Activated CD8-positive, alpha-beta memory T cell treated with anti-CD3 and anti-CD28 coated beads, Interleukin-2, amount 10 ng/mL, durations not matched to agents 7 days and 5 days (primary cell): ENCODE measurements at regions of chr14 and their contacts with region 1.

Region 1: GRCh38 chr14:61837336-61838229 is 75.4 kb downstream of the SNAPC1 start:
- DNase-seq: peak; percentile 83
- ATAC-seq: peak; percentile 97
- H3K4me3 Mint-ChIP-seq: no peak overlapping the region
- H3K27ac Mint-ChIP-seq: no peak overlapping the region
- H3K4me1 Mint-ChIP-seq: peaks cover 5% of the 10 kb centered on the region
- H3K27me3 Mint-ChIP-seq: peaks cover 33% of the 10 kb centered on the region

Region 2: GRCh38 chr14:61269321-61270083 is 568.1 kb before region 1 on chr14:
- CTCF ChIA-PET with region 1: interaction called, 19 read pairs
- DNase-seq: peak; percentile 87
- ATAC-seq: peak; percentile 94
- H3K4me3 Mint-ChIP-seq: peak overlapping the region; percentile 63
- H3K27ac Mint-ChIP-seq: no peak overlapping the region
- H3K4me1 Mint-ChIP-seq: peaks cover 8% of the 10 kb centered on the region
- H3K27me3 Mint-ChIP-seq: peaks cover 60% of the 10 kb centered on the region

Region 3: GRCh38 chr14:61475316-61475715 is 362.3 kb before region 1 on chr14:
- CTCF ChIA-PET with region 1: interaction called, 27 read pairs
- DNase-seq: no peak
- ATAC-seq: no peak
- H3K4me3 Mint-ChIP-seq: no peak overlapping the region
- H3K27ac Mint-ChIP-seq: peak overlapping the region; percentile 85
- H3K4me1 Mint-ChIP-seq: peaks cover 95% of the 10 kb centered on the region
- H3K27me3 Mint-ChIP-seq: no peaks in the 10 kb centered on the region

Region 4: DNA sequence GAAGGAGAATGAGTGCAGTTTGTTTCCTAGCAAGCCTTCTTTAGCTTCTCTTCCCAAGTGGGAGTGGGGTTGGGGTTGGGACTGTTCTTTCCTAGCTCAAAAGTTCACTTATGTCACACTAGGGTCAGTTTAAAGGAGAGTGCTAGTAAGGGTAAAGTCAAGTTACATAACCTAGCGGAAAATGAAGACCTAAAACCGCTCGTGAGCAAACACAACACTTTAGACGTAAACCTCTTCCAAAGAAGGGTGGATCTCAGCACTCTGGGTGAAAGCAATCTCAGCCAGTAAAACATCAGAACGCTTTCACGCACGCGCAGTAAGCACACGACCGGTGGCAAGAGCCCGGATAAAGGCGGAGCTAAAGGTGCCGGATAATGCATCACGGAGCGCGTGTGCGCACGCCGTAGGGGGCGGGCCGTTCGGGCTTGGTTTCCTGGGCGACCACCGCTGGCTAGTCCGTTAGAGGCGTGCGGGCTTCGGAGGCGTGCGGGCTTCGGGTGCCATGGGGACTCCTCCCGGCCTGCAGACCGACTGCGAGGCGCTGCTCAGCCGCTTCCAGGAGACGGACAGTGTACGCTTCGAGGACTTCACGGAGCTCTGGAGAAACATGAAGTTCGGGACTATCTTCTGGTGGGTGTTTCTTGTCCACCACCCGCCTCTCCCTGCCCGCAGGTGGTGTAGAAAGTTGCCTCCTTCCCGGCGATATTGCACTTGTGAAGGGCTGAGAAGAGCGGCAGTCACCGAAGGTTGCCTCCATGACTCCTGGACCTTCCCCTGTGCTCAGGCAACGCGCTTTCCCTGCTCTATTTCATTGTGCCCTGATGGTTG is 75.4 kb before region 1 on chr14 and contains the start of gene SNAPC1:
- CTCF ChIA-PET with region 1: interaction called, 13 read pairs
- DNase-seq: peak; percentile 99
- ATAC-seq: peak; percentile 99
- H3K4me3 Mint-ChIP-seq: peak within 1 kb of the TSS; percentile 94
- H3K27ac Mint-ChIP-seq: peak within 1 kb of the TSS; percentile 98
- H3K4me1 Mint-ChIP-seq: peaks cover 42% of the 10 kb centered on the region
- H3K27me3 Mint-ChIP-seq: no peaks in the 10 kb centered on the region
- total RNA-seq, gene SNAPC1: 5.1 to 5.8 TPM

Region 5: GRCh38 chr14:61860294-61860918 is 22.8 kb after region 1 on chr14:
- CTCF ChIA-PET with region 1: interaction called, 11 read pairs
- DNase-seq: peak; percentile 76
- ATAC-seq: peak; percentile 90
- H3K4me3 Mint-ChIP-seq: no peak overlapping the region
- H3K27ac Mint-ChIP-seq: no peak overlapping the region
- H3K4me1 Mint-ChIP-seq: no peaks in the 10 kb centered on the region
- H3K27me3 Mint-ChIP-seq: peaks cover 27% of the 10 kb centered on the region

Region 6: GRCh38 chr14:61925043-61925442 is 87.5 kb after region 1 on chr14:
- CTCF ChIA-PET with region 1: no interaction called
- DNase-seq: no peak
- ATAC-seq: no peak
- H3K4me3 Mint-ChIP-seq: no peak overlapping the region
- H3K27ac Mint-ChIP-seq: no peak overlapping the region
- H3K4me1 Mint-ChIP-seq: peaks cover 3% of the 10 kb centered on the region
- H3K27me3 Mint-ChIP-seq: peaks cover 52% of the 10 kb centered on the region

Region 7: GRCh38 chr14:61950340-61950739 is 112.8 kb after region 1 on chr14:
- CTCF ChIA-PET with region 1: no interaction called
- DNase-seq: no peak
- ATAC-seq: no peak
- H3K4me3 Mint-ChIP-seq: no peak overlapping the region
- H3K27ac Mint-ChIP-seq: no peak overlapping the region
- H3K4me1 Mint-ChIP-seq: no peaks in the 10 kb centered on the region
- H3K27me3 Mint-ChIP-seq: peaks cover 23% of the 10 kb centered on the region

Region 8: DNA sequence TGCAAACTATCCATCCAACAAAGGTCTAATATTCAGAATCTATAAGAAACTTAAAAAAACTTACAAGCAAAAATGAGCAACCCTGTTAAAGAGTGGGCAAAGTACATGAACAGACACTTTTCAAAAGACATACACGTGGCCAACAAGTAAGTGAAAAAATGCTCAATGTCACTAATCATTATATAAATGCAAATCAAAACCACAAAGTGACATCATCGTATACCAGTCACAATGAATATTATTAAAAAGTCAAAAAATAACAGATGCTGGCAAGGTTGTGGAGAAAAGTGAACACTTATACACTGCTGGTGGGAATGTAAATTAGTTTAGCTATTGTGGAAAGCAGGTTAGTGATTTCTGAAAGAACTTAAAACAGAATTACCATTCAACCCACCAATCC is 123.8 kb after region 1 on chr14:
- CTCF ChIA-PET with region 1: no interaction called
- DNase-seq: no peak
- ATAC-seq: no peak
- H3K4me3 Mint-ChIP-seq: no peak overlapping the region
- H3K27ac Mint-ChIP-seq: no peak overlapping the region
- H3K4me1 Mint-ChIP-seq: no peaks in the 10 kb centered on the region
- H3K27me3 Mint-ChIP-seq: peaks cover 31% of the 10 kb centered on the region